Activated CD8-positive, alpha-beta memory T cell treated with anti-CD3 and anti-CD28 coated beads, Interleukin-2, amount 10 ng/mL, durations not matched to agents 7 days and 5 days (primary cell): ENCODE measurements at regions of chr3 and their contacts with region 1.

Region 1: GRCh38 chr3:45995236-45996192 is at the start of gene FYCO1:
- DNase-seq: peak; percentile 94
- ATAC-seq: peak; percentile 83
- H3K4me3 Mint-ChIP-seq: peak within 1 kb of the TSS; percentile 79
- H3K27ac Mint-ChIP-seq: peak within 1 kb of the TSS; percentile 95
- H3K4me1 Mint-ChIP-seq: peaks cover 50% of the 10 kb centered on the region
- H3K27me3 Mint-ChIP-seq: no peaks in the 10 kb centered on the region
- total RNA-seq, gene FYCO1: 19.1 to 27.7 TPM

Region 2: GRCh38 chr3:45795882-45796765 is 199.4 kb before region 1 on chr3 and contains the start of gene SLC6A20:
- CTCF ChIA-PET with region 1: no interaction called
- DNase-seq: peak; percentile 40
- ATAC-seq: peak; percentile 63
- H3K4me3 Mint-ChIP-seq: peak within 1 kb of the TSS; percentile 55
- H3K27ac Mint-ChIP-seq: no peak within 1 kb of the TSS
- H3K4me1 Mint-ChIP-seq: peaks cover 7% of the 10 kb centered on the region
- H3K27me3 Mint-ChIP-seq: peaks cover 72% of the 10 kb centered on the region
- total RNA-seq, gene SLC6A20: 0.05 TPM in 1 of 2 experiments, not detected in the other

Region 3: DNA sequence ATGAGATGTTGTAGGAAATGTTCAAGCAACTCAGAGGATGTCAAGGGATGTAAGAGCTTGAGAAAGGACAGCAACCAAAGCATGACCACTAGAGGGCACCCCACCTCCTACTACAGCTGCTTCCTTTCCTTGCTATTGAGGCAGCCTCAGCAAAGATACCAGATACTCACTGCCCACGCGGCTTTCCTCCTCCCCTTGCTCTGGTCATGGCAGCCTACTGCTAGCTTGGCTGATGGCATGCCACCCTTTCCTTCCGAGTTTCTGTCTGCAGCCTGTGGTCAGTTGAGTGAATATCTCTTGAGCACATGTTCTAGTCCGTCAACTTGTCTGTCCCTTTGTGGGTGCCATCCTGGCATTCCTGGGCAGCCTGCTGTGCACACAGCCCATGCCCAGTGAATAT is 56.6 kb before region 1 on chr3:
- CTCF ChIA-PET with region 1: interaction called, 16 read pairs
- DNase-seq: peak; percentile 93
- ATAC-seq: peak; percentile 79
- H3K4me3 Mint-ChIP-seq: no peak overlapping the region
- H3K27ac Mint-ChIP-seq: peak overlapping the region; percentile 57
- H3K4me1 Mint-ChIP-seq: peaks cover 58% of the 10 kb centered on the region
- H3K27me3 Mint-ChIP-seq: no peaks in the 10 kb centered on the region

Region 4: GRCh38 chr3:45948311-45948781 is 47.2 kb before region 1 on chr3:
- CTCF ChIA-PET with region 1: interaction called, 11 read pairs
- DNase-seq: no peak
- ATAC-seq: no peak
- H3K4me3 Mint-ChIP-seq: peak overlapping the region; percentile 48
- H3K27ac Mint-ChIP-seq: peak overlapping the region; percentile 84
- H3K4me1 Mint-ChIP-seq: peaks cover 95% of the 10 kb centered on the region
- H3K27me3 Mint-ChIP-seq: no peaks in the 10 kb centered on the region

Region 5: GRCh38 chr3:45964139-45964538 is 31.4 kb before region 1 on chr3:
- CTCF ChIA-PET with region 1: interaction called, 29 read pairs
- DNase-seq: peak; percentile 83
- ATAC-seq: peak; percentile 87
- H3K4me3 Mint-ChIP-seq: no peak overlapping the region
- H3K27ac Mint-ChIP-seq: peak overlapping the region; percentile 85
- H3K4me1 Mint-ChIP-seq: peaks cover 83% of the 10 kb centered on the region
- H3K27me3 Mint-ChIP-seq: no peaks in the 10 kb centered on the region

Region 6: GRCh38 chr3:45978006-45978761 is 17.3 kb before region 1 on chr3:
- CTCF ChIA-PET with region 1: interaction called, 21 read pairs
- DNase-seq: peak; percentile 85
- ATAC-seq: peak; percentile 35
- H3K4me3 Mint-ChIP-seq: peak overlapping the region; percentile 57
- H3K27ac Mint-ChIP-seq: peak overlapping the region; percentile 92
- H3K4me1 Mint-ChIP-seq: peaks cover 92% of the 10 kb centered on the region
- H3K27me3 Mint-ChIP-seq: no peaks in the 10 kb centered on the region

Region 7: DNA sequence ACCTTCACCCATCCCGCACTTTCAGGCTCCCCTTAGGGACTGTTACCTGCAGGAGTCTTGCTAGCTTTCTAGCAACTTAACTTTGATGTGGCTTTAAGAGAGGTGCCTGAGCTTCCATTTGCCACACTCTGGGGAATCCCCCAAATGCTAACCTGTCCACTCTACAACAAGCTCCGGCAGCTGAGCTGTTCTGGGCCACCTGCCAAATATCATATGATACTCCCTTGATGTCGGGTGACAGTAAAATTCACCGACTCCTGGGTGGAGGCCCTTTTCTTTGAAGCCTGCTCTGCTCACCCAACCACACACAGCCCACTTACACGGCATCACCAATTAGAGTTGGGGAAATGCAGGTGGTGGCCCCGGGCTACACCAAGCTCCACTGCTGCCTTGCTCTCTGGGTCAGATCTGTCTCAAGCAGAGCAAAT is 69.8 kb after region 1 on chr3:
- CTCF ChIA-PET with region 1: interaction called, 10 read pairs
- DNase-seq: peak; percentile 71
- ATAC-seq: peak; percentile 70
- H3K4me3 Mint-ChIP-seq: no peak overlapping the region
- H3K27ac Mint-ChIP-seq: peak overlapping the region; percentile 16
- H3K4me1 Mint-ChIP-seq: peaks cover 47% of the 10 kb centered on the region
- H3K27me3 Mint-ChIP-seq: peaks cover 9% of the 10 kb centered on the region